GM10248 (cell line): ENCODE measurements at regions of chr20 and their contacts with region 1.

Region 1: GRCh38 chr20:46174469-46175128 is 56.5 kb downstream of the CD40 start:
- DNase-seq: peak; percentile 91
- CTCF ChIP-seq: peak; percentile 88

Region 2: DNA sequence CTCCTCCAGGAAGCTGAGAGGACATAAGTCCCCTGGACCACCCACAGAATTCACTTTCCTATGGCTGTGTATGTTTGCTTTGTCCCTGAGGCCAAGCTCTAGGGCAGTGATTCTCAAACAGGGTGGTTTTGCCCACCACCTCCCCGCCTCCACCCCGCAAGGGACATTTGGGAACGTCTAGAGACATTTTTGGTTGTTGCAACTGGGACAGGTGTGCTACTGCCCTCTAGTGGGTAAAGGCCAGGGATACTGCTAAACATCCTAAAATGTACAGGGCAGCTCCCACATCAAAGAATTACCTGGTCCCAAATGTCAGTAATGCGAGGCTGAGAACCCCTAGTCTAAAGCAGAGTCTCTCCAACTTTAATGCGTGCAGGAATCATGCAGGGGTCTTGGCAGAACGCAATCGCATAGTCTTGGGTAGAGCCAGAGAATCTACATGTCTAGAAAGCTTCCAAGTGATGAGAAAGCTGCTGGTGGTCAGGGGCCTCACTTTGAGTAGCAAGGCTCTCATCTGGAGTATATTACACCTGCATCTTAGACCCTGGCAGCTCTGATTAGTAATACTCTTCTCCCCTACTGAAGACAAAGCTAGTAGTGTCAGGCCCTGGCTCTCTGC is 1078.7 kb before region 1 on chr20:
- CTCF ChIA-PET with region 1: no interaction called
- POLR2A ChIA-PET with region 1: no interaction called
- DNase-seq: peak; percentile 69
- CTCF ChIP-seq: peak; percentile 77

Region 3: GRCh38 chr20:45857114-45857881 is 317.3 kb before region 1 on chr20 and contains the starts of genes ACOT8 and ZSWIM3:
- CTCF ChIA-PET with region 1: no interaction called
- POLR2A ChIA-PET with region 1: no interaction called
- DNase-seq: peak; percentile 100
- CTCF ChIP-seq: no peak

Region 4: GRCh38 chr20:46022411-46023147 is 152.0 kb before region 1 on chr20:
- CTCF ChIA-PET with region 1: interaction called, 20 read pairs
- POLR2A ChIA-PET with region 1: no interaction called
- DNase-seq: peak; percentile 82
- CTCF ChIP-seq: peak; percentile 72

Region 5: DNA sequence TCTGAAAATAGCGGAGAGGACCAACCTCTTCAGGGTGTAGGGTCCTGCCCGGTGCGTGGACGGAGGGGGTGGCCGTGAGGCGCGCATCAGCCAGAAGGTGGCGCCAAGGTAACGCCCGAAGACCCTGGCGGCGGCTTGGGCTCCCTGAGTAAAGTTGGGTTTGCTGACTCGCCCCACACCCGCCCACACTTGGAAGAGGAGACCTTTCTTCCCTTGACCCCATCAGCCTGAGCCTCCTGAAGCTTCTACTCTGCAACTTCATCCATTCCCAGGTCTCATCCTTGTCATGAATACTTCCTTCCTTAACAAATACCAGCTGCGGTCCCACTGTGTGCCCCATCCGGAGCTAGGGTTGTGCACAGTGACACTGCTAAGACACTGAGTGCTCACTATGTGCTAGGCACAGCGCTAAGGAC is 41.9 kb before region 1 on chr20:
- CTCF ChIA-PET with region 1: interaction called, 21 read pairs
- POLR2A ChIA-PET with region 1: no interaction called
- DNase-seq: peak; percentile 83
- CTCF ChIP-seq: peak; percentile 90

Region 6: DNA sequence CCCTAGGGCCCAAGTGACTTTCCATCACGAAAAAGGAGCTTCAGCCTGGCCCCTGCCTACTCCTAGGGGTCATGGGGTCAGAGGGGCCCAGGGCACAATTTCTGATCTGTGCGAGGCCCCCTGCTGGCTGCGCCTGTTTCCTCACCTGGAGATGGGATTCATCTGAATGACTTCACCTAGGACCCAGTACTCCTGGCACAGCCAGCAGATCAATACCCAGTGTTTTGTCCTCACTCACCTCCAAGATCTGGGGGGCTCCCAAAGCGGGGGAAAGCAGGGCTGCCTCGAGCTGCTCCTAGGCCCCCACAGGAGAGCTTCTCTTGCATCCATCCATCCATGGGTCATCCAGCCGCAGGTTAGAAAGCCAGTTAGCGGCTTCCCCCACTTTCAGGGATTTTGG is 22.7 kb before region 1 on chr20:
- CTCF ChIA-PET with region 1: interaction called, 20 read pairs
- POLR2A ChIA-PET with region 1: no interaction called
- DNase-seq: peak; percentile 68
- CTCF ChIP-seq: peak; percentile 20

Region 7: DNA sequence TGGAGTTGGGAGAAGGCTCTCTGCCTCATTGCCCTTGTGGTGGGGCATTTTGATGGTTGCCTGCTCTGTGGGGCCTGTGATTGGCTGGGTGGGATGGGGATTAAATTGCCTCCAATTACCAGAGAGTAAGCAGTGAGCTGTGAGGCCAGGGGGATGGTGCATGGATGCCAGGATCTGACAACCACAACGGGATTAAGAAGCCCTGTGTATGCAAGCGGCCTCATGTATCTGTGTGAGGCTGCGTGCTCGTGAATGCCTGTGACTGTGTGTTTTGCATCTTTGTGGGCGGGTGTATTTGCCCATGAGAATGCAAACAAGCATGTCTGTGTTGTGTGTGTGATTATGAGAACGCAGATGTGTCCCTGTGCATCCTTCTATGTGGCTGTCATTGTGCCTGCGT is 10.3 kb before region 1 on chr20:
- CTCF ChIA-PET with region 1: interaction called, 23 read pairs
- POLR2A ChIA-PET with region 1: interaction called, 3 read pairs
- DNase-seq: no peak
- CTCF ChIP-seq: no peak

Region 8: DNA sequence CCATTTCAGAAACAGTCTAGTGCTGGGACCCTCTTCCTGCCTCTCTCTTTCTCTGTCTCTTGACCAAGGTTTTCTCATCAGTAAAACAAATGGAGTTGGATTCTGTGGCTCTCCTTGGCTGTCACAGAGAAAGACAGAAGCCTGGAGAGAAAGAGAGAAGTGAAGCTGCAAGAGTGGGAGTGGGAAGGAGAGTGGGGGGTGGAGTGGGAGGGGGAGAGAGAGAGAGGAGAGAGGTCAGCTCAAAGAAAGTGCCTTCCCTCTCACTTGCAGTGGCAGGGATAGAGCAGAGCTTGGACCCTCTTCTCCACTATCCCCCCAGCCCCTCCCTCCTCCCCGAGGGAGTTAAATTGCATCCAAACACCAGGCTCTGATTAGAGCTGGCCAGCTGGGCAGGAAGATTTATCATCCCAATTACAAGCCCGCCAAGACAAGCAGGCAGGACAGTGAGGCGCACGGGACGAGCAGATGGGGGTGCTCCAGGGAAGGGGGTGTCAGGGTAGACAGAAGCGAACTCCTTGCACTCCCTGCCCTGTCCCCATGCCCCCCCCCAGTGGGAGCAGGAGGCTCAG is 17.9 kb after region 1 on chr20:
- CTCF ChIA-PET with region 1: interaction called, 12 read pairs
- POLR2A ChIA-PET with region 1: no interaction called
- DNase-seq: no peak
- CTCF ChIP-seq: no peak

Region 9: GRCh38 chr20:46230801-46231282 is 56.2 kb after region 1 on chr20:
- CTCF ChIA-PET with region 1: no interaction called
- POLR2A ChIA-PET with region 1: no interaction called
- DNase-seq: no peak
- CTCF ChIP-seq: no peak